ENCODE measurements at regions of chr16 and their contacts with region 1.

Region 1: DNA sequence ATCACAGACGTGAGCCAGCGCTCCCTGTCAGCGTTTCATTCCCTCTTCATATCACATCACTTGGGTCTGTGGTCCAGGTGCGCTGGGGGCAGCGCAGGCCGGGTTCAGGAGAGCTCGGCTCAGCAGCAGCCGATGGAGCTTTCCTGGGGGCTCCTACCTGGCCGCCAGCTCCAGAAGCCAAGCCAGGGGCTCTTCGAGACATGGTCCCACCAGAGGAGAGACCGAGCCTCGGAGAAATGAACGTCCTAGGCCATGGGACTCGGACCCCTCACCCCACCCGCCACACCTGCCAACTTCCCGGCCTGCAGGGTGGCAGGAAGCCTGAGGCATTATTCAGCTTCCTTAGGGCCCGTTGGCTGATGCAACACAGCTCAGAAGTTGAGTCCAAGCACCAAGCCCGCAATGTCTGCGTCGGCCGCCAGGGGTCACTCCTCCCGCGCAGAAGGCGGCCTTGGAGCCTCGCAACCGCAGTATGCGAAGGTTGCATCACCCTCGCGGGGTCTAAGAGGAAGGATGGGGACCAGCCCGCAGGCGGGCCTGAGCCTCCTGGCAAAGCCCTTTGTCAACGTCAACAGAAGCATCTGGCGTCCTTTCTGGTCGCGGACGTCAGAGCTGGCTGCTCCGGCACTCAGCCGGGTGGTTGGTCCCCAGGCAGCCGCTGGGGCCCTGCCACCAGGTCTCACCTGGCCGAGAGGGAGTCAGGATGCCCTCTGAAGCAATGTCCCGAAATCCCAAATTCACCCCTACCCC is 13.2 kb upstream of the KLHDC4 start:
- DNase-seq: peak; percentile 85 to 97 (median 94)
- ATAC-seq: peak; percentile 87
- H3K4me3 ChIP-seq: no peak overlapping the region
- H3K4me3 Mint-ChIP-seq: peak overlapping the region; percentile 39
- H3K27ac ChIP-seq: no peak overlapping the region
- H3K27ac Mint-ChIP-seq: peak overlapping the region; percentile 80
- H3K4me1 ChIP-seq: peaks cover 43% of the 10 kb centered on the region
- H3K4me1 Mint-ChIP-seq: peaks cover 38% of the 10 kb centered on the region
- H3K27me3 ChIP-seq: no peaks in the 10 kb centered on the region
- H3K27me3 Mint-ChIP-seq: peaks cover 2% of the 10 kb centered on the region
- CTCF ChIP-seq: peak; percentile 84

Region 2: DNA sequence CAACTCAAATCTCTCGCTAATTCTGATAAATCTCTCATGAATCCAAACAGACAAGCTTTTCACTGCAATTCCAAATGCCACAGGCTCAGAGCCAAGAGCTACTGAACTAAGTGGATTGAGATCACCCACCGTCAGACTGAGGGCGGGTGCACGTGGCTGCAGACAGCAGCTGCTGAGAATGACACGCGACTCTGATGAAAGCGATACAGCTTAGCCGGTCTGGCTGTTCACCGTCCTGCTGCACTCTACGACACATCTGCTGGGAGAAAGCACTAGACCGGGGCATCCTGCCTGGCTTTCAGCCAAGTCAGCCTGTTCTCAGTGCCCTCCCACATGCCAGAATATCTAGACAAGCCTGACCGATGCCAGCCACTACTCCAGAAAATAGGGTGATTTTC is 55.8 kb before region 1 on chr16:
- CTCF ChIA-PET with region 1: no interaction called
- POLR2A ChIA-PET with region 1: no interaction called
- intact Hi-C with region 1: no loop called
- DNase-seq: peak in 3 of 9 experiments; percentile 17 to 61 (median 59)
- ATAC-seq: no peak
- H3K4me3 ChIP-seq: no peak overlapping the region
- H3K4me3 Mint-ChIP-seq: no peak overlapping the region
- H3K27ac ChIP-seq: no peak overlapping the region
- H3K27ac Mint-ChIP-seq: no peak overlapping the region
- H3K4me1 ChIP-seq: peaks cover 9% of the 10 kb centered on the region
- H3K4me1 Mint-ChIP-seq: peaks cover 14% of the 10 kb centered on the region
- H3K27me3 ChIP-seq: no peaks in the 10 kb centered on the region
- H3K27me3 Mint-ChIP-seq: no peaks in the 10 kb centered on the region
- CTCF ChIP-seq: no peak

Region 3: DNA sequence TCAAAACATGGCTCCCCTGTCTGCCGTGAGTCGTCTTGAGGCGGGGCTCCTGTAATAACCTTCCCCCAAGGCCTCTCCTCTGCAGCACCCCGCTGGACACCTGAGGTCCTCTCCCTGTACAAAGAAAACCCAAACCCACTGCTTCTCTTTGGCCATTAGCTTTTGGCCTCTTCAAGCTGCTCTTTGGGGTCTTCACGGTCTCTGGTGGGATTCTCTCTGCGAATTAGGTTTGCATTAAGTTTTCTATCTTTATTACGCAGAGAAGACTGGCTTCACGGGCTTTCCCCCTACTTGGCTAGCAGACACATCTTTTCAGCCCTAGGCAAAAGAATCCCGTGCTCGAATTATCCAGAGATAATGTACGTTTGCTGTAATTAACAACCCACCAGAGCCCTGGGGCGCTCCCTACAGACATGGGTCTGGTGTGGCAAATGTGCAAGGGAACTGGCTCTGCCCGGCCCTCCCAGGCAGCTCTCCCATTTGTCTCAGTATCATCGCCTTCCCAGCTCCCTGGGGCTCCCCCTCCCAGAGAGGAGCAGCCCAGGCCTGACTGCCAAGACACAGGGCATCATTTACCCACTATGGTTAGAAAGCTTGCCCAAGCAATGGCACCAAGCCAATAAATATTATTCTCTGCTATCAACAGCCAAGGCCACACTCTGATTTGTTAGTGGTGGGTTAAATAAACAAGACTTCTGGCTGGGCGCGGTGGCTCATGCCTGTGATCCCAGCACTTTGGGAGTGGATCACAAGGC is 11.4 kb after region 1 on chr16:
- CTCF ChIA-PET with region 1: interaction called, 52 read pairs
- POLR2A ChIA-PET with region 1: no interaction called
- intact Hi-C with region 1: no loop called
- DNase-seq: no peak
- ATAC-seq: no peak
- H3K4me3 ChIP-seq: no peak overlapping the region
- H3K4me3 Mint-ChIP-seq: no peak overlapping the region
- H3K27ac ChIP-seq: no peak overlapping the region
- H3K27ac Mint-ChIP-seq: no peak overlapping the region
- H3K4me1 ChIP-seq: no peaks in the 10 kb centered on the region
- H3K4me1 Mint-ChIP-seq: no peaks in the 10 kb centered on the region
- H3K27me3 ChIP-seq: no peaks in the 10 kb centered on the region
- H3K27me3 Mint-ChIP-seq: no peaks in the 10 kb centered on the region
- CTCF ChIP-seq: no peak

Region 4: GRCh38 chr16:87812200-87812656 is 33.2 kb after region 1 on chr16:
- CTCF ChIA-PET with region 1: interaction called, 21 read pairs
- POLR2A ChIA-PET with region 1: no interaction called
- intact Hi-C with region 1: no loop called
- DNase-seq: peak in 1 of 9 experiments; percentile 17
- ATAC-seq: no peak
- H3K4me3 ChIP-seq: no peak overlapping the region
- H3K4me3 Mint-ChIP-seq: no peak overlapping the region
- H3K27ac ChIP-seq: no peak overlapping the region
- H3K27ac Mint-ChIP-seq: no peak overlapping the region
- H3K4me1 ChIP-seq: peaks cover 1% of the 10 kb centered on the region
- H3K4me1 Mint-ChIP-seq: peaks cover 2% of the 10 kb centered on the region
- H3K27me3 ChIP-seq: no peaks in the 10 kb centered on the region
- H3K27me3 Mint-ChIP-seq: no peaks in the 10 kb centered on the region
- CTCF ChIP-seq: no peak

Region 5: GRCh38 chr16:87828071-87828971 is 49.3 kb after region 1 on chr16:
- CTCF ChIA-PET with region 1: interaction called, 16 read pairs
- POLR2A ChIA-PET with region 1: no interaction called
- intact Hi-C with region 1: no loop called
- DNase-seq: no peak
- ATAC-seq: peak; percentile 2
- H3K4me3 ChIP-seq: no peak overlapping the region
- H3K4me3 Mint-ChIP-seq: no peak overlapping the region
- H3K27ac ChIP-seq: no peak overlapping the region
- H3K27ac Mint-ChIP-seq: no peak overlapping the region
- H3K4me1 ChIP-seq: no peaks in the 10 kb centered on the region
- H3K4me1 Mint-ChIP-seq: no peaks in the 10 kb centered on the region
- H3K27me3 ChIP-seq: no peaks in the 10 kb centered on the region
- H3K27me3 Mint-ChIP-seq: no peaks in the 10 kb centered on the region
- CTCF ChIP-seq: no peak

Region 6: DNA sequence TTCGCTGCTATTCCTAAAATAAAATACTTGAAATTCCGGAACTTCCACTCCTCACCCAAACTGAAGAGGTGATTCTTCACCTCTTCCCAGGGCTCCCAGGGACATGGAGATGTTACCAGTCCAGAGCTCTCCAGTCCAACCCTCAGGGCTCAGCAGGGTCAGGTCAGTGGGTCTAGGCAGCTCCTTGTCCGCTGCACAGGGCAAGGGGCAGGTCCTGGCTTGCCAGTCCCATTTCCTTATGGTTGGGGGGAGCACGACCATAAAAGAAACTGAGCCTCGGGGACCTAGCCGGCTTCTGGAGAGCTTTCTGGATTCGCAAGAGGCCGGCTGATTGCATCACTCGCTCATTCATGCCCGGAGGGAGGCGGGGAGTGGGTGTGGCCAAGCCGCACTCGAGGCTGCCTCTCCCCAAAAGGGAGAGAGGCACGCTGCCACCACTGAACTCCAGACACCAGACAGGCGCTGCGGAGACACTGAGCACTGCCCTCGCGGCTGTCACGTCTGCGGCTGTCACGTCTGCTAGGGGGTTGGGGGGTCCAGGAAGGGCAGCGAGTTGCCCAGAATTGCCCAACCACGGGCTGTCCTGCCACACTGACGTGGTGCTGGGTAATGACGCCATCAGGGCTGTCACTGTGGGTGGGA is 74.5 kb after region 1 on chr16:
- CTCF ChIA-PET with region 1: interaction called, 129 read pairs
- POLR2A ChIA-PET with region 1: interaction called, 3 read pairs
- intact Hi-C with region 1: loop called (anchors 1 kb)
- DNase-seq: peak; percentile 72 to 97 (median 87)
- ATAC-seq: peak; percentile 68
- H3K4me3 ChIP-seq: peak overlapping the region; percentile 15 to 28
- H3K4me3 Mint-ChIP-seq: peak overlapping the region; percentile 62
- H3K27ac ChIP-seq: peak overlapping the region in 1 of 2 experiments; percentile 15
- H3K27ac Mint-ChIP-seq: peak overlapping the region; percentile 89
- H3K4me1 ChIP-seq: peaks cover 44% of the 10 kb centered on the region
- H3K4me1 Mint-ChIP-seq: peaks cover 39% of the 10 kb centered on the region
- H3K27me3 ChIP-seq: no peaks in the 10 kb centered on the region
- H3K27me3 Mint-ChIP-seq: no peaks in the 10 kb centered on the region
- CTCF ChIP-seq: no peak

Region 7: DNA sequence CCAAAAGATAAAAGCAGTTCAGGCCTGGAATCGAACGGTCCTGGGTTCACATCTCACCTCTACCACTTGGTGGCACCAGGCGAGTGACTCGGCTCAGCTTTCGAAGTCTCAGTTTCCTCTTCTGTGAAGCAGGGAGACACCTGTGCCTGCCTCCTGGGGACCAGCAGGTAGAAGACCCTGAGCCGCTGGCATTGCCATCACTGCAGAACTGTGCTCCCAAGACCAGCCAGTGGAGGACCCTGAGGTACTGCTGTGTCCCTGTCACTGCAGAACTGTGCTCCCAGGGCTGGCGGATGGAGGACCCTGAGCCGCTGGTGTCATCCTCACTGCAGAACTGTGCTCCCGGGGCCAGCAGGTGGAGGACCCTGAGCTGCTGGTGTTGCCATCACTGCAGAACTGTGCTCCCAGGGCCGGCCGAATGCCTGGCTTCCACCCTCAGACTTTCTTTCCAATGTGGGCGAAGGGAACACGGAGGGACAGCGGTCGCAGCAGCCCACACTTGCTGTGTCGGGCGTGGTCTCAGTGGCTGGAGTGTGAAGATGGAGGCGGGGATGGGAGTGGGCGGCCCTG is 99.0 kb after region 1 on chr16:
- CTCF ChIA-PET with region 1: interaction called, 232 read pairs
- POLR2A ChIA-PET with region 1: interaction called, 5 read pairs
- intact Hi-C with region 1: no loop called
- DNase-seq: peak in 1 of 9 experiments; percentile 46
- ATAC-seq: no peak
- H3K4me3 ChIP-seq: no peak overlapping the region
- H3K4me3 Mint-ChIP-seq: no peak overlapping the region
- H3K27ac ChIP-seq: no peak overlapping the region
- H3K27ac Mint-ChIP-seq: no peak overlapping the region
- H3K4me1 ChIP-seq: peaks cover 6% of the 10 kb centered on the region
- H3K4me1 Mint-ChIP-seq: peaks cover 8% of the 10 kb centered on the region
- H3K27me3 ChIP-seq: peaks cover 0 to 2% of the 10 kb centered on the region in 2 experiments
- H3K27me3 Mint-ChIP-seq: no peaks in the 10 kb centered on the region
- CTCF ChIP-seq: no peak

Region 8: DNA sequence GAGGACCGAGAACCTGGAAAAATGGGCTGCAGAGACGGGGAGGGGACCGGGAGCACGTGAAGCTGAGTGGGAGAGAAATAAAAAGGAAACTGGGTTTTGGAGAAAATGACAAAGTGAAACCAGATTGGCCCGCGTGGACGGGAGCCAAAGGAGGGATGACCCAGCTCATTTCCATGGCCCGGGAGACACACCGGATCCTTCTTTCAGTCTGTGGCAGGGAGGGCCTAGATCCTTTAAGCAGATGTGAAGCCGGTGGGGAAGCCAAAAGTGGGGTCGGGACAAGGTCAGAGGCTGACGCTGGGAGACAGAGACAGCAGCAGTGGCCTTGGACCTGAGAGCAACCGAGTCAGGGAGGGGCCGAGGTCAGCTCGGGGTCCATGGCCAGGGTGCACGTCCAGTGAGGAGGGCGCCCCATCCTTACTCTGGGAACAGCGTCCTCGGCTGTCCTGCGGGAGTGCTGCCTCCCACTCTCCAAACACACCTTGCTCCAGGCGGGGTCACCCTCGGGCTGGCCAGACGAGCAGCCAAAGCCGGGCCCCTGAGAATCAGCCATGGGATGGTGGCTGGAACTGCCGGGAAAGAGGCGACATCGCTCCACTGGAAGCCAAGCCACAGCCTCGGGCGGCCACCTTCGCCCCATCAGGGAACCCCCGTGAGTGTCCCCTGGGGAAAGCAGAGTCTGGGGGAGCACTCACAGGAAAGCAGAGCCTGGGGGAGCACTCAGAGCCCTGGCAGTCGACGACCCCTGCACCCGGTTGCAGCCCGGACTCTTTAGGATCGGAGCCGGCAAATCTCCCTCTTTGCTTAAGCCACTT is 140.1 kb after region 1 on chr16:
- CTCF ChIA-PET with region 1: interaction called, 13 read pairs
- POLR2A ChIA-PET with region 1: no interaction called
- intact Hi-C with region 1: no loop called
- DNase-seq: no peak
- ATAC-seq: no peak
- H3K4me3 ChIP-seq: no peak overlapping the region
- H3K4me3 Mint-ChIP-seq: no peak overlapping the region
- H3K27ac ChIP-seq: no peak overlapping the region
- H3K27ac Mint-ChIP-seq: no peak overlapping the region
- H3K4me1 ChIP-seq: no peaks in the 10 kb centered on the region
- H3K4me1 Mint-ChIP-seq: peaks cover 2% of the 10 kb centered on the region
- H3K27me3 ChIP-seq: no peaks in the 10 kb centered on the region
- H3K27me3 Mint-ChIP-seq: peaks cover 9% of the 10 kb centered on the region
- CTCF ChIP-seq: no peak

Measured in CD8-positive, alpha-beta T cell (primary cell).